Heart right ventricle (tissue), 16 donors: ENCODE measurements at regions of chr5 and their contacts with region 1.

Region 1: DNA sequence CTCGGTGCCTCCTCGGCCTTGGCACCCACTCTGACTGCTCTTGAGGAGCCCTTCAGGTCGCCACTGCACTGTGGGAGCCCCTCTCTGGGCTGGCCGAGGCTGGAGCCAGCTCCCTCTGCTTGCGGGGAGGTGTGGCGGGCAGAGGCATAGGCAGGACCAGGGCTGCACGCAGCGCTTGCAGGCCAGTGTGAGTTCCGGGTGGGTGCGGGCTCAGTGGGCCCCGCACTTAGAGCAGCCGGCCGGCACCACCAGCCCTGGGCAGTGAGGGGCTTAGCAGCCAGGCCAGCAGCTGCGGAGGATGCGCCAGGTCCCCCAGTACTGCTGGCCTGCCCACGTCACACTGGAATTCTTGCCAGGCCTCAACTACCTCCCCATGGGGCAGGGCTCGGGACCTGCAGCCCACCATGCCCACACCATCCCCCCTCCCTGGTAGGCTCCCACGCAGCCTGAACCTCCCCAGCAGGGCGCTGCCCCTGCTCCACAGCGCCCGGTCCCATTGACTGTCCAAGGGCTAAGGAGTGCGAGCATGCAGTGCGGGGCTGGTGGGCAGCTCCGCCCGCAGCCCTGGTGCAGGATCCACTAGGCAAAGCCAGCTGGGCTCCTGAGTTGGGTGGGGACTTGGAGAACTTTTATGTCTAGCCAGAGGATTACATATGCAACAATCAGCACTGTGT is 602.9 kb upstream of the ST8SIA4 start:
- DNase-seq: no peak
- ATAC-seq: peak in 1 of 8 donors; percentile 50
- H3K4me3 ChIP-seq: no peak overlapping the region
- H3K27ac ChIP-seq: no peak overlapping the region
- H3K4me1 ChIP-seq: no peaks in the 10 kb centered on the region
- H3K27me3 ChIP-seq: no peaks in the 10 kb centered on the region
- CTCF ChIP-seq: no peak

Region 2: GRCh38 chr5:101067429-101067828 is 438.6 kb before region 1 on chr5:
- intact Hi-C with region 1: no loop called
- DNase-seq: no peak
- ATAC-seq: no peak
- H3K4me3 ChIP-seq: no peak overlapping the region
- H3K27ac ChIP-seq: no peak overlapping the region
- H3K4me1 ChIP-seq: no peaks in the 10 kb centered on the region
- H3K27me3 ChIP-seq: no peaks in the 10 kb centered on the region
- CTCF ChIP-seq: no peak

Region 3: DNA sequence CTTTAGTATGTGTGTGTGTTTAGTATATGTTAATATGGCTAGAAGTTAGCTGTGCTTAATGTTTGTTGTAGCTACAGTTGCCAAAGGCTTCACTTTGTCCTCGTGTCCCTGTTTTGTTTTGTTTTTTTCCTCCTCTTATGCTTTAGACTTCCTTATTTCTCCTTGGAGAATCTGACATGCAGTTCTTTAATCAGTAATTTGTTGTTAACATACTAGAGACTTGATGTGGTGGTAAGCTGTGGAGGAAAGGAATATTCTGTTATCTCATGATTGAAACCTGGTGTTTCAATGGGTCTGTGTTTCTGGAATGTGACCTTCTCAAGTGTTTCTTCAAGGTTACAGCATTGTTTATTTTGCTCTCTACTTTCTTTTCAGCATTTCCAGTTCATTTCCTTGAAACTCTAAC is 87.3 kb before region 1 on chr5:
- intact Hi-C with region 1: loop called in 1 of 10 experiments (anchors 5 kb)
- DNase-seq: no peak
- ATAC-seq: peak in 1 of 8 donors; percentile 22
- H3K4me3 ChIP-seq: no peak overlapping the region
- H3K27ac ChIP-seq: peak overlapping the region in 1 of 10 donors; percentile 18
- H3K4me1 ChIP-seq: no peaks in the 10 kb centered on the region
- H3K27me3 ChIP-seq: no peaks in the 10 kb centered on the region
- CTCF ChIP-seq: no peak

Region 4: GRCh38 chr5:101560842-101561467 is 54.9 kb after region 1 on chr5:
- intact Hi-C with region 1: no loop called
- DNase-seq: no peak
- ATAC-seq: no peak
- H3K4me3 ChIP-seq: no peak overlapping the region
- H3K27ac ChIP-seq: no peak overlapping the region
- H3K4me1 ChIP-seq: no peaks in the 10 kb centered on the region
- H3K27me3 ChIP-seq: no peaks in the 10 kb centered on the region
- CTCF ChIP-seq: no peak